ENCODE measurements at regions of chr2 and their contacts with region 1.

Region 1: GRCh38 chr2:112254466-112255239 is at the start of gene ZC3H8:
- DNase-seq: peak; percentile 95 to 98
- ATAC-seq: peak; percentile 98 to 99 (median 98)
- H3K4me3 ChIP-seq: peak within 1 kb of the TSS; percentile 95
- H3K27ac ChIP-seq: peak within 1 kb of the TSS; percentile 96
- H3K4me1 ChIP-seq: peaks cover 9% of the 10 kb centered on the region
- H3K27me3 ChIP-seq: no peaks in the 10 kb centered on the region
- CTCF ChIP-seq: no peak
- total RNA-seq, gene ZC3H8: 11.1 to 22.5 (median 15.5) TPM

Region 2: DNA sequence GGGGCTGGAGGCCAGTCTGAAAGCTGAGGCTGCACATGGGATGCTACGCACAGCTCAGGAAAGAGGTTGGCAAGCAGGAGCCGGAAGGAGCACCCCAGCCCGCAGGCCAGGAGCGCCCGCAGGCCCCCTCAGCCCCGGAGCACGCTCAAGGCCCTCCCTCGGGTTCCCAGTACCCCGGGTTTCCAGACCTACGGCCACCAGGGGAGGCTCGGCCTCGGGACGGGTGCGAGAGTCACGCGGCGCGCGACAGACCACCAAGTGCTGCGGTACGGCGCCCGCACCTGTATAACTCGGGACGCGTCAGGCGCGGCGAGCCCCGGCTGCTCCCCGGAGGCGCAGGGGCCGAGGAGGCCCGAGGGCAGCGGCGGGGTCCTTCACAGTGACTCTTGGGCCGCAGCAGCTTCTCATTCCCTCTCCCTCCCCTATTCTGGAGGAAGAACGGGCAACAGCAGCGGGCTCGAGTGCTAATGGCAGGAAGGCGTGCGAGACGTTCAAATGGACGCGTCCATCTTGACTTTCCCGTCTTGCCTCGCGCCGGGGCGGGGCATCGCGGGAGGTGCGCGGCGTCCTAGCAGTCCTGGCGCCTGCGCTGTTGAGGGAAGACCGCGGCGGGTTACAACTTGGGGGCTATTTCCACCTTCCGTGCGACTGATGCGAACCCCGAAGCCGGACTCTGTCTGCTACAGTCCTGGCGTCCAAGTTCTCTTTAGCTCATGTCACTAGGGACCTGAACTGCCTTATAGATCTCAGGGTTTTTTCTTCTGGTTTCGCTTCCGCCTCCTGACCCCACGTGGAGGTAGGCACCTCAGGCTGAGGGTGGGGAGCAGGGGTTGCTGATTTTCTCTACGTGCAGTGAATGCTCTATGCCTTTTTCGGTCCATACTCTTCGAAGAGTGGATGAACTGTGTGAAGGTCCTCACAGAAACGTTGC is 370.7 kb before region 1 on chr2 and contains the start of gene ANAPC1:
- intact Hi-C with region 1: loop called in 1 of 2 experiments (anchors 10 kb)
- DNase-seq: peak; percentile 86 to 90
- ATAC-seq: peak; percentile 96 to 99 (median 98)
- H3K4me3 ChIP-seq: peak within 1 kb of the TSS; percentile 85
- H3K27ac ChIP-seq: peak within 1 kb of the TSS; percentile 82
- H3K4me1 ChIP-seq: peaks cover 8% of the 10 kb centered on the region
- H3K27me3 ChIP-seq: no peaks in the 10 kb centered on the region
- CTCF ChIP-seq: no peak
- total RNA-seq, gene ANAPC1: 16.3 to 23.9 (median 20.4) TPM

Region 3: DNA sequence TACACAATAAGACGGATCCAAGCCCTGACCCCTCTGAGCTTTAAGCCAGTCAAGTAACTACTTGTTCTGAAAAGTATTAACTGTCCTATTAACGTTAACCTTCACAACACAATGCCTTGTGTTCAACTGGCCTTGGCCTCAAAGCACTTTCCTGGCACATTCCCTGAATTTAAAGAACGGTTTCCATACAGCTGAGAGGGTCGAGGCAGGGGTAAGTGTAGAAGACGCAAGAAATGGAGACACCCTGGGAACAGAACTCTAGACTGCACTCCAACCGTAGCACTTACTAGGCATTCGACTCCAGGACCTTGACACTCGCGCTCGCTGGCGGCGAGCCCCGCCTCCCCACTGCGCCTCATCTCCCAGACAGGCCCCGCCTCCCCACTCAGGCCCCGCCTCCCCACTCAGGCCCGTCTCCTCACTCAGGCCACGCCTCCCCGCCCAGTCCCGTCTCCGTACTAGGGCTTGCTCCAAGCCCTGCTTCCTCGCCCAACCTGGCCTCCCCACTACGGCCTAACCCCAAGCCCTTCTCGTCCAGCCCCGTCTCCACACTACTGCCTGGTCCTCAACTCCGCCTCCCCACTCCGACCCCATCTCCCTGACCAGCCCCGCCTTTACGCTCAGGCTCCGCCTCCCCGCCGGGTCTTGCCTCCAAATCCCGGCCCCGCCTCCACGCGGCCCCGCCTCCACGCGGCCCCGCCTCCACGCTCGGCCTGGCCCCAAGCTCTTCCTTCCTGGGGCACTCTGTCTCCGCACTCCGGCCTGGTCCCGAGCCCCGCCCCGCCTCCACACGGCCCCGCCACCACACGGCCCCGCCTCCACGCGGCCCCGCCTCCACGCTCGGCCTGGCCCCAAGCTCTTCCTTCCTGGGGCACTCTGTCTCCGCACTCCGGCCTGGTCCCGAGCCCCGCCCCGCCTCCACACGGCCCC is 200.5 kb before region 1 on chr2:
- intact Hi-C with region 1: loop called in 1 of 2 experiments (anchors 2 kb)
- DNase-seq: peak; percentile 98 to 99
- ATAC-seq: peak; percentile 82 to 87 (median 82)
- H3K4me3 ChIP-seq: peak overlapping the region; percentile 68
- H3K27ac ChIP-seq: peak overlapping the region; percentile 83
- H3K4me1 ChIP-seq: peaks cover 18% of the 10 kb centered on the region
- H3K27me3 ChIP-seq: no peaks in the 10 kb centered on the region
- CTCF ChIP-seq: no peak

Region 4: GRCh38 chr2:112216166-112216565 is 38.5 kb before region 1 on chr2:
- intact Hi-C with region 1: no loop called
- DNase-seq: no peak
- ATAC-seq: no peak
- H3K4me3 ChIP-seq: no peak overlapping the region
- H3K27ac ChIP-seq: no peak overlapping the region
- H3K4me1 ChIP-seq: no peaks in the 10 kb centered on the region
- H3K27me3 ChIP-seq: no peaks in the 10 kb centered on the region
- CTCF ChIP-seq: no peak

Region 5: DNA sequence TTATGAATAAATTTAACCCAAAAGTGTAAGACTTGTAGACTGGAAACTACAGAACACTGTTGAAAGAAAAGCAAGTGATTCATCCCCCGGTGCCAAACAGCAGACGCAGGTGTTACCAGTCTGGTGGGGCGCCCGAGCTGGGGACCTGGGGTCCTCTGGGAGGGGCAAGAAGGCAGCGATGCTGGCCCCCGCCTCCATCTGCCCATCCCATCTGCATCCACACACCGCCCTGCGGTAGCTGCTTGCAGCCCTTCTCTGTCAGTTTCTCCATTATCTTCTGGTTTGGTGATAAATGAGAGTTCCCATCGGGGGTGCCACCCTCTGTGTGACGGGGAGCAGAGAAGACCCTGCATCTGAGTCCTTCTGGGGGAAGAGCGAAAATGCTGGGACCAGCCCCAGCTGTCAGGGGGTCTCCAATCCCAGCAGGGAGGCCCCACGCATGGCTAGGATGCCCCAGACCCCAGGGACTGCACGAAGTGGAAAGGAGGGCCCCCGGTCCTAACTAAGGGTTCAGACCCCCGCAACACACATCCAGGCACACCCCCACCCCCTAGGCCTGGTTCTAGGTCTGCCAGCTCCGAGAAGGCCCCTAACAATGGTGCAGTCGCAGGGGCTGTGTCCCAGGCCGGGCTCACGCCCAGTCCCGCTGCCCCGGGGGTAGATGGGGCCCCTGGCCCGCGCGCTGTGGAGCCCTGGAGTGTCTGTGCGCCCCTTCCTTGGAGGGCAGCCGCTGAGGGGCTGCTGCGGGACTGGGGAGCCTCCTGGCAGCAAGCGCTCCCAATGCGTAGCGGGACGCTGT is 179.5 kb after region 1 on chr2:
- intact Hi-C with region 1: loop called (anchors 5 to 10 kb)
- DNase-seq: peak in 1 of 2 donors; percentile 18
- ATAC-seq: no peak
- H3K4me3 ChIP-seq: no peak overlapping the region
- H3K27ac ChIP-seq: no peak overlapping the region
- H3K4me1 ChIP-seq: peaks cover 7% of the 10 kb centered on the region
- H3K27me3 ChIP-seq: peaks cover 0 to 2% (median 0%) of the 10 kb centered on the region in 3 donors
- CTCF ChIP-seq: no peak

Measured in psoas muscle (tissue), 8 donors.